B cell (primary cell): ENCODE measurements at regions of chr19 and their contacts with region 1.

Region 1: GRCh38 chr19:41263850-41264580 is at the start of gene HNRNPUL1:
- DNase-seq: peak; percentile 100
- ATAC-seq: peak; percentile 72
- H3K4me3 ChIP-seq: peak within 1 kb of the TSS; percentile 85 to 95 (median 93)
- H3K4me3 Mint-ChIP-seq: peak within 1 kb of the TSS; percentile 98
- H3K27ac ChIP-seq: peak within 1 kb of the TSS; percentile 97 to 99
- H3K27ac Mint-ChIP-seq: peak within 1 kb of the TSS; percentile 100
- H3K4me1 ChIP-seq: peaks cover 24 to 38% of the 10 kb centered on the region in 2 donors
- H3K4me1 Mint-ChIP-seq: peaks cover 36% of the 10 kb centered on the region
- H3K27me3 ChIP-seq: no peaks in the 10 kb centered on the region
- H3K27me3 Mint-ChIP-seq: no peaks in the 10 kb centered on the region
- CTCF ChIP-seq: peak; percentile 29
- total RNA-seq, gene HNRNPUL1: 273 and 274 TPM in 2 replicates

Region 2: DNA sequence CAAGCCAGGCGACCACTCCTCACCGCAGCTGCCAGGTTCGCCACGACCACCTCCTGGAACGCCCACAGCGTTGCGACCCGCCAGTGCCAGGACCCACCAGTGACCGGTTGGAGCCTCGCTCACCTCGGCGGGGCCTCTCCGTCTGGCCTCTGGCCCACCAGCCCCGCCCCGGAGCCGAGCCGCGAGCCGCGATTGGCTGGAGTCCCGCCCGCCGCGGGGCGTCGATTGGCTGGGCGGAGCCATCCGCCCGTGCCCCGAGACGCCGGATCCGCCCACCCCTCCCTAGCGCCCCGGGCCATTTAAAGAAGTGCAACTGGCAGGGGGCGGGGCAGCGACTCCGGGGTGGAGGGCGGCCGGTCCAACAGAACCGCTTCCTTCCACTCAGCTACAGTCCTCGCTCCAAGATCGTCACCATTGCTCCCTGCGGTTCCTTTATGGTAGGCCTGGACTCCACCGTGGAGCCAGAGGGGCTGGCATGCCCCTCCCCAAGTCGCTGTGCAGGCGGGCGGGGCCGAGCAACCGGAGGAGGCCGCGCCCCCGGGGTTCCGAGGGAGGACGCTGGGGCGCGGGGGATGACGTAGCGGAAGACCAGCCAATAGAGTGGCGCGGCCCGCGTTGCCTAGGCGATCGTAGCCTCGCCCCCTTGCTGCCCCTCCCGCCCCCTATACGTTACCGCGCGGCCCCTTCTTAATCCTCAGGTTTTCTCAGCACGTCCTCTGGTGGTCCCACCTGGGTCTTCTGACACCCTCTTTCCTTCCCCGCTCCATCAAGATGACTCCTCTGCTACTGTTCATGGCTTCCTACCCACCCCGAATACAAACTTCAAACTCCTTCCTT is 819.6 kb before region 1 on chr19 and contains the start of gene SERTAD3:
- CTCF ChIA-PET with region 1: no interaction called
- POLR2A ChIA-PET with region 1: no interaction called
- intact Hi-C with region 1: loop called (anchors 5 kb)
- DNase-seq: peak; percentile 99
- ATAC-seq: peak; percentile 68
- H3K4me3 ChIP-seq: peak within 1 kb of the TSS; percentile 85 to 100 (median 95)
- H3K4me3 Mint-ChIP-seq: peak within 1 kb of the TSS; percentile 97
- H3K27ac ChIP-seq: peak within 1 kb of the TSS; percentile 87 to 92
- H3K27ac Mint-ChIP-seq: peak within 1 kb of the TSS; percentile 95
- H3K4me1 ChIP-seq: peaks cover 12% of the 10 kb centered on the region in 2 donors
- H3K4me1 Mint-ChIP-seq: peaks cover 26% of the 10 kb centered on the region
- H3K27me3 ChIP-seq: no peaks in the 10 kb centered on the region
- H3K27me3 Mint-ChIP-seq: no peaks in the 10 kb centered on the region
- CTCF ChIP-seq: peak; percentile 42
- total RNA-seq, gene SERTAD3: 39.3 and 41.6 TPM in 2 replicates

Region 3: DNA sequence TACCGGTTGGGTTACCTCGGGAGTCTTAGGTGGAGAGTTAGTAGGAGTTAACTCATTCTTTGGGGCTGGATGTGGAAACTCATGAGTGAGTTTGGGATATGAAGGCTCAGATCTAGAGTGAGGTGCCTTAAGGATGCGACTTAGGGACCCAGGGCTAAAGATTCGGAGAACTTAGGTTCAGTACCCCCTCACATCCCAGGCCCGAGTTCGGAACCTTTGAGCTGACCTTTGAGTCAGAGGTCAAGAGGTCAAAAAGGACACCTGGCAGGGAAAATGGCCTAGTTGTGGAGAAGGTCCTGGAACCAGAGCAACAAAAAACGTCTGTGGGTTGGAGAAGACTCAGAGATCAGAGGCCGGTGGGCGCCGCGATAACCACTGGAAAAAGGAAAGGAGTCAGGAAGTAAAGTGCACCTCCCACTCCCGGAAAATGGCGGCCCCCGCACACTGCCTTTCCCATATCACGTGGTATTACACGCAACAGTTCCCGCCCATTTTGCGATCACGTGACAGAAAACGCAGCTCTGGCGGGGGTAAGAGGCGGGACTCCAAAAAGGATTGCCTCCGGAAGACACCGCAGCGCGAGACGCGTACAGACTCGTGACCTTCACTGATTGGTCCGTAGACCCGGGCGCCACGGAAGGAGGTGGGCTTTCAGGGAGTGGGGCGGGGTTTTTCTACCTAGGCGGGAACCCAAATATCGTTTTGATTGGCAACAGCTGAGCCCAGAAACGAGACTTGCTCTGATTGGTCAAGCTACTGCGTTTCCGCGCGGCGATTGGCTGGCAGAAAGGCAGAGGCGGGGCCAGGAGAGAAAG is 513.7 kb before region 1 on chr19 and contains the start of gene ACTMAP:
- CTCF ChIA-PET with region 1: no interaction called
- POLR2A ChIA-PET with region 1: no interaction called
- intact Hi-C with region 1: loop called (anchors 5 kb)
- DNase-seq: peak; percentile 100
- ATAC-seq: peak; percentile 88
- H3K4me3 ChIP-seq: peak within 1 kb of the TSS; percentile 86 to 98 (median 89)
- H3K4me3 Mint-ChIP-seq: peak within 1 kb of the TSS; percentile 93
- H3K27ac ChIP-seq: peak within 1 kb of the TSS; percentile 94 to 97
- H3K27ac Mint-ChIP-seq: peak within 1 kb of the TSS; percentile 95
- H3K4me1 ChIP-seq: peaks cover 29 to 54% of the 10 kb centered on the region in 2 donors
- H3K4me1 Mint-ChIP-seq: peaks cover 41% of the 10 kb centered on the region
- H3K27me3 ChIP-seq: no peaks in the 10 kb centered on the region
- H3K27me3 Mint-ChIP-seq: no peaks in the 10 kb centered on the region
- CTCF ChIP-seq: no peak
- total RNA-seq, gene ACTMAP: 9.8 and 10.2 TPM in 2 replicates

Region 4: GRCh38 chr19:41298348-41298964 is 34.4 kb after region 1 on chr19:
- CTCF ChIA-PET with region 1: interaction called, 16 read pairs
- POLR2A ChIA-PET with region 1: interaction called, 15 read pairs
- intact Hi-C with region 1: loop called (anchors 1 kb)
- DNase-seq: peak; percentile 85
- ATAC-seq: peak; percentile 25
- H3K4me3 ChIP-seq: no peak overlapping the region
- H3K4me3 Mint-ChIP-seq: peak overlapping the region; percentile 86
- H3K27ac ChIP-seq: peak overlapping the region; percentile 83 to 100
- H3K27ac Mint-ChIP-seq: peak overlapping the region; percentile 98
- H3K4me1 ChIP-seq: peaks cover 58 to 65% of the 10 kb centered on the region in 2 donors
- H3K4me1 Mint-ChIP-seq: peaks cover 71% of the 10 kb centered on the region
- H3K27me3 ChIP-seq: no peaks in the 10 kb centered on the region
- H3K27me3 Mint-ChIP-seq: no peaks in the 10 kb centered on the region
- CTCF ChIP-seq: no peak

Region 5: GRCh38 chr19:41353466-41354342 is 89.7 kb after region 1 on chr19 and contains the start of gene TGFB1:
- CTCF ChIA-PET with region 1: interaction called, 25 read pairs
- POLR2A ChIA-PET with region 1: interaction called, 46 read pairs
- intact Hi-C with region 1: loop called (anchors 1 kb)
- DNase-seq: peak; percentile 97
- ATAC-seq: peak; percentile 72
- H3K4me3 ChIP-seq: peak within 1 kb of the TSS; percentile 67 to 100 (median 92)
- H3K4me3 Mint-ChIP-seq: peak within 1 kb of the TSS; percentile 93
- H3K27ac ChIP-seq: peak within 1 kb of the TSS; percentile 79 to 91
- H3K27ac Mint-ChIP-seq: peak within 1 kb of the TSS; percentile 92
- H3K4me1 ChIP-seq: peaks cover 26 to 30% of the 10 kb centered on the region in 2 donors
- H3K4me1 Mint-ChIP-seq: peaks cover 44% of the 10 kb centered on the region
- H3K27me3 ChIP-seq: no peaks in the 10 kb centered on the region
- H3K27me3 Mint-ChIP-seq: no peaks in the 10 kb centered on the region
- CTCF ChIP-seq: peak; percentile 84
- total RNA-seq, gene TGFB1: 120 TPM in 2 replicates

Region 6: DNA sequence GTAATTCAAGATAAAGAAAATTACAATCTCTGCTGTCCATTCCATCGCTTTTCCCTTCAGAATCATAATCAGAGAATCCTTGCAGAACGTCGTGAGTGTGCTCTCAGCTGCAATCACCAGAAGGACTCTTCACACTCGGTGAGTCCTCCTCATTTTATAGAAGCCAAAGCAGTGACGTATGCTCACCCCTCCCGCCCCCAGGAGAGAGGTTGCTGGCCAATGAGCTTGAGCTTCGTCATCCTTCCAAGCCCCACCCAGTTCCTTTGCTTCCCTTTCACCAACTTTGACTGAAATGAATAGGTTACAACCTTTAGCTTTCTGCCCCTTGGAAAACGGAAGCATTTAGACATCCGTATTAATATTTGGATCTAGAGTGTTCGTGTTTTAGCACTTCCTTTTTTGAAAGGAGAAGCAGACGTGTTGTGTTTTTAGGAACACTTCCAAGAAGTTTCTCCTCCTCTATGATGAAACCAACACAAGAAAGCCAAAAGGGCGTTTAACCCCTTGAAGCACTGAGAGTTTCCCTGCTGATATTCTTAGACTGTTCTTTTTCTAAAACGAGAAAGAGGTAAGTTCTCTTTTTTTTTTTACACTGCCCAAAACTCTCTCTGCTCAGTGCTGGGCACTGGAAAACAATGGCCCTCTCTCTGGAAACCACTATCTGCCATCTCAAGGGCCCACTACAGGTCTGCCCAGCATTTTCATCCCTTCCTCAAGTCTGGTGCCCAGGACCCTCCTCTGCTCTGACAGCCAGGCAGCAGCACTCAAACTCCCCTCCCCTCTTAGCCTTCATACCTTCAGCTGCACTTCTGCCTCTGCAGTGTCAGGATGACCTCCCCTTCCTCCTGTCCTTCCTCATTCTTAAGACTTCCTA is 267.7 kb after region 1 on chr19:
- CTCF ChIA-PET with region 1: no interaction called
- POLR2A ChIA-PET with region 1: no interaction called
- intact Hi-C with region 1: loop called (anchors 5 kb)
- DNase-seq: peak; percentile 92
- ATAC-seq: peak; percentile 79
- H3K4me3 ChIP-seq: peak overlapping the region; percentile 37 to 67 (median 52)
- H3K4me3 Mint-ChIP-seq: peak overlapping the region; percentile 80
- H3K27ac ChIP-seq: peak overlapping the region; percentile 72 to 83
- H3K27ac Mint-ChIP-seq: peak overlapping the region; percentile 88
- H3K4me1 ChIP-seq: peaks cover 64 to 78% of the 10 kb centered on the region in 2 donors
- H3K4me1 Mint-ChIP-seq: peaks cover 83% of the 10 kb centered on the region
- H3K27me3 ChIP-seq: no peaks in the 10 kb centered on the region
- H3K27me3 Mint-ChIP-seq: no peaks in the 10 kb centered on the region
- CTCF ChIP-seq: no peak

Region 7: GRCh38 chr19:41872775-41873647 is 609.0 kb after region 1 on chr19:
- CTCF ChIA-PET with region 1: no interaction called
- POLR2A ChIA-PET with region 1: interaction called, 6 read pairs
- intact Hi-C with region 1: loop called (anchors 10 kb)
- DNase-seq: peak; percentile 80
- ATAC-seq: no peak
- H3K4me3 ChIP-seq: no peak overlapping the region
- H3K4me3 Mint-ChIP-seq: peak overlapping the region; percentile 52
- H3K27ac ChIP-seq: peak overlapping the region; percentile 79 to 96
- H3K27ac Mint-ChIP-seq: peak overlapping the region; percentile 90
- H3K4me1 ChIP-seq: peaks cover 68 to 90% of the 10 kb centered on the region in 2 donors
- H3K4me1 Mint-ChIP-seq: peaks cover 70% of the 10 kb centered on the region
- H3K27me3 ChIP-seq: no peaks in the 10 kb centered on the region
- H3K27me3 Mint-ChIP-seq: no peaks in the 10 kb centered on the region
- CTCF ChIP-seq: peak; percentile 82